HepG2 (cell line): ENCODE measurements at regions of chr2 and their contacts with region 1.

Region 1: DNA sequence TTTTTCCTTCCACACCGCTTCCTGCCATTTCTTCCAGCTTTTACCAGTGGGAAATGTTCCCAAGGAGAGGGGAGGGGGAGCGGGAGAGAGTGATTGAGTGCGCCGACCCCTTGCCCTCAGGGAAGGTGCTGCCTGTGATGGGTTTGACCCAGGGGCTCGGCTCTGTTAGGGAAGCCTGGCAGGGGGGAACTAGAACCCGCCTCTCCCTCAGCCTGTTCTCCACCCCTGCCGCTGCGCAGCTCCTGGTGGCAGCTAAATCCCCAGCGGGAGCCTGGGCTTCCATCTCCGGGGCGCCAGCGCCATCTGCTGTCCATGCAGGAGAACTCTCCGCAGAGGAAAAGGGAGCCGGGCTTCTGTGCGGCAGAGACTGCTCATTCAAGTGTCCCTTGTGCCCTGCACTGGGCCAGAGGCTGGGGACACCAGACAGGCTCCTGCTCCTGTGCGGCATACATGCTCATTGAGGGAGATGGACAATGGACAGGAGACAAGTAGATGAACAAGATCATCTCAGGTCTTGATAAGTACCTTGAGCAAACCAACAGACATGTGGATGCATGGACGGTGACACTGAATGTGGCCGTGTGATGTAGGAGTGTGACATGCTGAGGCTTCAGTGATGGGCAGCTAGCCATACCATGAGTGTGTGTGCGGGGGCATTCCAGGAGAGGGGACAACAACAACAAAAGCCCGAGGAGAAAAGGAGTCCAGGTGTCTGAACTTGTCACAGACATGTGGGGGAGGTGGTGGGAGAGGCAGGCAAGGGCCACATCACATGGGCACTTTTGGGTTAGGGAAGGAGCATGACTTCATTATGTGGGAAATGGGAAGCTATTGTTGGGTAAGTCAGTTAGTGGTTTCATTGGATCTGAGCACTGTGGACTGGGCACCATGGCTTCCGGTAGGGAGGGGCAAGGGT is 13.3 kb downstream of the CHPF start:
- DNase-seq: peak; percentile 77
- ATAC-seq: peak; percentile 89
- H3K4me3 ChIP-seq: no peak overlapping the region
- H3K27ac ChIP-seq: no peak overlapping the region
- H3K4me1 ChIP-seq: peaks cover 11% of the 10 kb centered on the region
- H3K27me3 ChIP-seq: peaks cover 28 to 92% of the 10 kb centered on the region in 2 experiments; a peak in 4 of 5 replicates
- CTCF ChIP-seq: peak; percentile 99
- EP300 ChIP-seq: no peak
- POLR2A ChIP-seq: no peak
- RAD21 ChIP-seq: peak; percentile 100

Region 2: DNA sequence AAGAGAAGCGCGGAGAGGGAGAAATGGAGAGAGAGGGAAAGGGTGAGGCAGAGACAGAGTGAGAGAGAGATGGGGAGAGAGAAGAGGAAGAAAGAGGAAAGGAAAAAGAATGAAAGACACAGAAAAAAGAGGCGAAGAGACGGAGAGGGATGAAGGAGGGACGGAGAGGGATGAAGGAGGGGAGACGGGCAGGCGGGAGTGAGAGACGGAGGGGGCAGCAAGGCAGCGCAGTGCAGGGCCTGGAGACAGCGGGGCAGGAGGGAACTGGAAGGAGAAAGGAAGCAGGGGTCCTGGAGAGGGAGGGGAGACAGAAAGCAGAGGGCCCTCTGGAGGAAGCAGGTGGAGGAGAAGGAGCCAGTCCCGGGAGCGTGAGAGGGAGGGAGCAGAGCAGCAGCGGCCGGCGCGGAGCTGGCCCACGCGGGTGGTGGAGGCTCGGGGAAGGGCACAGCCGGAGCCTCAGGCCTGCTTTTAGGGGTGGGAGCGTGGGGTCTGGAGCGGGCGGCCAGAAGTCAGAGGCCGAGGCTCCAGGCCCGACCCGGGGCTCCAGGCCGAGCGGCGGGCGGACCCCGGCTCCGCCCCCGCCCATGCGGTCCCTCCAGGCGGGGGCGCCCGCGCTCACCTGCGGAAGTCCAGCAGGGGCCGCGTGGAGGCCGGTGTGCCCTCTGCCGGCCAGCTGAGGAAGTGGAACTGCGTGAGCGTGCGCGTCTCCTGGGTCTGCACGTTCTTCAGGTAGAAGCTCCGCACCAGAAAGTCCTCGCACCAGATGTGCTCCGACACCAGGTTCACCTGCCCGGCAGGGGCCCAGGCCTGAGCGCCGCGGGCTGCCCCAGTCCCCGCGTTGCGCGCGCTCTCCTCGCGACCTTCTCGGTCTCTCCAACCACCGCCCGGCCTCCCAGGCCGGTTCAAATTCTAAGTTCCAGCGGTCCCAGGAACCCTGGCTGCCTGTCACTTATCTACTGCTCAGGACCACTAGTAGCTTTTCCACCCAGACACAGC is 235.7 kb before region 1 on chr2:
- CTCF ChIA-PET with region 1: no interaction called
- POLR2A ChIA-PET with region 1: no interaction called
- in situ Hi-C with region 1: no loop called
- intact Hi-C with region 1: loop called (anchors 10 kb)
- DNase-seq: peak; percentile 80
- ATAC-seq: peak; percentile 85
- H3K4me3 ChIP-seq: peak overlapping the region; percentile 60 to 81 (median 80)
- H3K27ac ChIP-seq: no peak overlapping the region
- H3K4me1 ChIP-seq: peaks cover 36% of the 10 kb centered on the region
- H3K27me3 ChIP-seq: peaks cover 6 to 83% of the 10 kb centered on the region in 2 experiments; a peak in 4 of 5 replicates
- CTCF ChIP-seq: peak; percentile 93
- EP300 ChIP-seq: peak; percentile 48 to 53; a peak in 1 of 4 replicates
- POLR2A ChIP-seq: peak; percentile 48 to 70; a peak in 3 of 4 replicates
- RAD21 ChIP-seq: peak; percentile 99

Region 3: DNA sequence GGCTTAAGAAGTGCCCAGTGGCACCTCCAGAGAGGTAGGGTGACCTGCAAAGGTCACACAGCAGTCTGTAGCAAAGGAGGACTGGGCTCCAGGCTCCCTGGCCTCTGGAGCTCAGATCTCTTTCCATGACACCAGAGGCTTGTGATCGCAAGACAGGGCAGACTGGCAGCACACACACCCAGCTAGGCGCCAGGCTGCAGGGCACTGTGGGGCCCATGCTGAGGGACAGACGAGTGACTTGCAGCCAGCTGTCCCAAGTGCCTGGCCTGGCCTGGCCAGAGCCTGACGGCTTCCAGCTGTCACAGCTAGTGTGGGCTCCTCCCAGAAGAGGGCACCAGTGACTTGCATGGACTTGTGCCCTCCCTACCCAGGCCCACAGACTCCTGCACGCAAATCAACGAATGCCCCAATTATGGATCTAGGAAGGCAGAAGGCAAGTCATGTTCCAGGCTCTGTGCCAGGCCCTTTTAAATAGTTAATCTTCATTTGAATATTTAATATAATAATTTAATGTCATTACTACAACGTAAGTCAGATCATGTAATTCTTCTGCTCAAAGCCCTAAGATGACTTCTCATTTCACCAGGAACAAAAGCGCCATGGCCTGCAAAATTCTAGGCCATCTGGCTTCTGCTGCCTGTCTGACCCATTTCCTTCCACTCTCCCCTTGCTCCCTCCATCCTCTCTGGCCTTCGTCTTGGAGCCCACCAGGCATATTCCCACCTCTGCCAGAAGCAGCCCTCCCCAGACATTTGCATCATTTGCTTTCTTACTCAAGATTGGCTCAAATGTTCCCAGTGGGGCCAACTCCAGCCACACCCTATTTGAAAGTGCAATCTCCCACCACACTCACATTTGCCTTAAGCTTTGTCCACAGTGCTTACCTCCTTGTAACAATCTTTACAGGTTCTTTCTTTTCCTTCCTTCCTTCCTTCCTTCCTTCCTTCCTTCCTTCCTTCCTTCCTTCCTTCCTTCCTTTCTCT is 99.4 kb before region 1 on chr2:
- CTCF ChIA-PET with region 1: interaction called, 11 read pairs
- POLR2A ChIA-PET with region 1: no interaction called
- in situ Hi-C with region 1: no loop called
- intact Hi-C with region 1: loop called (anchors 1 kb)
- DNase-seq: peak; percentile 21
- ATAC-seq: peak; percentile 91
- H3K4me3 ChIP-seq: no peak overlapping the region
- H3K27ac ChIP-seq: no peak overlapping the region
- H3K4me1 ChIP-seq: no peaks in the 10 kb centered on the region
- H3K27me3 ChIP-seq: peaks cover 16 to 62% of the 10 kb centered on the region in 2 experiments
- CTCF ChIP-seq: peak; percentile 77
- EP300 ChIP-seq: no peak
- POLR2A ChIP-seq: no peak
- RAD21 ChIP-seq: peak; percentile 64

Region 4: GRCh38 chr2:219475697-219476651 is 54.3 kb before region 1 on chr2:
- CTCF ChIA-PET with region 1: interaction called, 39 read pairs
- POLR2A ChIA-PET with region 1: no interaction called
- in situ Hi-C with region 1: loop called (anchors 10 kb)
- intact Hi-C with region 1: loop called (anchors 1 kb)
- DNase-seq: peak; percentile 60
- ATAC-seq: peak; percentile 84
- H3K4me3 ChIP-seq: no peak overlapping the region
- H3K27ac ChIP-seq: no peak overlapping the region
- H3K4me1 ChIP-seq: no peaks in the 10 kb centered on the region
- H3K27me3 ChIP-seq: peaks cover 19 to 82% of the 10 kb centered on the region in 2 experiments
- CTCF ChIP-seq: peak; percentile 93
- EP300 ChIP-seq: no peak
- POLR2A ChIP-seq: no peak
- RAD21 ChIP-seq: peak; percentile 84

Region 5: GRCh38 chr2:219498280-219499057 is 31.8 kb before region 1 on chr2 and contains the start of gene GMPPA:
- CTCF ChIA-PET with region 1: interaction called, 53 read pairs
- POLR2A ChIA-PET with region 1: interaction called, 21 read pairs
- in situ Hi-C with region 1: loop called (anchors 5 kb)
- intact Hi-C with region 1: loop called (anchors 1 kb)
- DNase-seq: peak; percentile 99
- ATAC-seq: peak; percentile 82
- H3K4me3 ChIP-seq: peak within 1 kb of the TSS; percentile 79 to 93 (median 89)
- H3K27ac ChIP-seq: peak within 1 kb of the TSS; percentile 70
- H3K4me1 ChIP-seq: peaks cover 56% of the 10 kb centered on the region
- H3K27me3 ChIP-seq: peaks cover 6 to 40% of the 10 kb centered on the region in 2 experiments; a peak in 4 of 5 replicates
- CTCF ChIP-seq: peak; percentile 36
- EP300 ChIP-seq: peak in 1 of 2 experiments; percentile 7; a peak in 2 of 4 replicates
- POLR2A ChIP-seq: peak in 1 of 2 experiments; percentile 84; a peak in 2 of 4 replicates
- RAD21 ChIP-seq: no peak
- total RNA-seq, gene GMPPA: 81.1 and 88.7 TPM in 2 replicates

Region 6: DNA sequence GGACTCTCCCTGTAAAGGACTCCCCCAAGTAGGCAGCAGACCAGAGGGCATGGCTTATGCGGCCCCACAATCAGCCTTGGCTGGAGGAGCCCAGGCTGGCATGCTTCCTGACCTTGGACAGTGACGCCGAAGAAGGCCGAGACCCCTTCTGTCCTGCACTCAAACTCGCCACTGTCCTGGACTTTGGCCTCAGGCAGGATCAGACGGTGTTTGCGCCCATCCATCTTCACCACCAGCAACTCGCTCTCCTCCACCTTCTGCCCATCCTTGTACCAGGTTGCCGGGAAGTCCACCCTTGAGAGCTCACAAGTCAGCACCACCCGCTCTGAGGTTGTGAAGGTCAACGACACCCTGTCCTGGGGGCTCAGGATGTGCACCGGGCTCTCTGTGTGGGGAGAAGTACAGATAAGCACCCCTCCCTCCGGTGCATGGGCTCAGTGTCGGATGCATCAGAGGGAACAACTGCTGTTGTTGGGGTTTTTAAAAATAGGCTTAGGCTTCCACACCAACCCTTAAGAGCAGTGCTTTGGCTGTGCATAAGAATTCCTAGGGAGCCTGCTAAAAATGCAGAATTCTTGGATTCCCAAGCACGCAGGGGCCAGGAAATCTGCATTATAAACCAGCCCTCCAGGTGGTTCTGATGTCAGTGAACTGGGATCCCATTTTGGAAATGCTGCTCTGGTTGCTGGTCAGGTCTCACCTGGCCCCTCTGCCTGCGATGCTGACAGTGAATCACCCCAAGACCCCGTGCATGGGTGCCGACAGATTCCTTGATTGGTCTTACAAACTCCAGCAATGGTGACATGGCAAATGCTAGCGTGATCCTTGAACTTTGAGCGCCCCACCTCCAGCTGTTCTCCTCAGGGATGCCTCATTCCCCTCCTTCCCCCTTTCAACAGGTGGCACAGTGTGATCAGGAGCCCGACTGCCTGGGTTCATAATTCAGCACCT is 35.1 kb after region 1 on chr2:
- CTCF ChIA-PET with region 1: no interaction called
- POLR2A ChIA-PET with region 1: no interaction called
- in situ Hi-C with region 1: no loop called
- intact Hi-C with region 1: no loop called
- DNase-seq: no peak
- ATAC-seq: no peak
- H3K4me3 ChIP-seq: no peak overlapping the region
- H3K27ac ChIP-seq: no peak overlapping the region
- H3K4me1 ChIP-seq: peaks cover 58% of the 10 kb centered on the region
- H3K27me3 ChIP-seq: no peaks in the 10 kb centered on the region
- CTCF ChIP-seq: no peak
- EP300 ChIP-seq: no peak
- POLR2A ChIP-seq: 0 out of 4 replicates have a peak, but pooled peaks of 1 of the 2 experiments have one; percentile 28
- RAD21 ChIP-seq: no peak

Region 7: DNA sequence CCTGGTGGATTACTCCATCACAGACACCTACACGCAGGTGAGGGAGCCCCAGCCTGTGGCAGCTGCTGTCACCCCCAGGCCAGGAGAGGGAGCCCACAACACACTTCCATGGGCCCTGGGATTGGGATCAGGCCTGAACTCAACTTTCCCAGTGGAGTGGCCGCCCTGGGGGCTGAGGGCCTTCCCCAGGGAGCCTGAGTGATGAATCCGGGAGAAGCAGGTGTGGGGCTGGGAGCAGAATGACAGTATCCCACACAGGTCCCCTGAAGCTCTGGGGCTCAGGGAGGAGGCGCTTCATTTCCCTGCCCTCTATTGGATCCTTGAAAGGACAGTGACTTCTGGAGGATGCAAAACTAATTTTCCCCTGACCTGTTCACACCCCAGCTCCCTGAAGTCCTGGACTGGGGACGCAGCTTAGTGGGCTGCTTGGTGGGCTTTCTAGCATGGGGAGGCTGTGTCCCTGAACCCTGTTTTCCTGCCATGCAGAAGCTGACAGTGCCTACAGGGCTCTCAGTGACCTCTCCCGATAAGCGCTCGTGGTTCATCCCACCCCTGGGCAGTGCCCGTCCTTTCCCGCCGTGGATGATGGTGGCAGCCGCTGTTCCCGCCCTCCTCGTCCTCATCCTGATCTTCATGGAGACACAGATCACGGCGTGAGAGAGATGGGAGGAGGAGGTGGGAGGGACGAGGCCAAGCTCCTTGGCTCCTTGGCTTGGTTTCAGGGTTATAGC is 108.1 kb after region 1 on chr2:
- CTCF ChIA-PET with region 1: no interaction called
- POLR2A ChIA-PET with region 1: no interaction called
- in situ Hi-C with region 1: no loop called
- intact Hi-C with region 1: no loop called
- DNase-seq: peak; percentile 28
- ATAC-seq: peak; percentile 55
- H3K4me3 ChIP-seq: no peak overlapping the region
- H3K27ac ChIP-seq: no peak overlapping the region
- H3K4me1 ChIP-seq: peaks cover 5% of the 10 kb centered on the region
- H3K27me3 ChIP-seq: peaks cover 25 to 89% of the 10 kb centered on the region in 2 experiments
- CTCF ChIP-seq: peak; percentile 55
- EP300 ChIP-seq: no peak
- POLR2A ChIP-seq: no peak
- RAD21 ChIP-seq: peak; percentile 22; the same call in 1 of the 2 replicates